ENCODE measurements at regions of chr20 and their contacts with region 1.

Region 1: GRCh38 chr20:45771182-45771759 is 20.4 kb downstream of the WFDC3 start:
- DNase-seq: peak; percentile 69 to 71 (median 70)
- H3K4me3 ChIP-seq: no peak overlapping the region
- H3K4me3 Mint-ChIP-seq: no peak overlapping the region
- H3K27ac ChIP-seq: no peak overlapping the region
- H3K27ac Mint-ChIP-seq: peak overlapping the region in 1 of 7 donors; percentile 23
- H3K4me1 ChIP-seq: no peaks in the 10 kb centered on the region
- H3K4me1 Mint-ChIP-seq: peaks cover 3% of the 10 kb centered on the region
- H3K27me3 ChIP-seq: no peaks in the 10 kb centered on the region
- H3K27me3 Mint-ChIP-seq: peaks cover 3 to 10% (median 8%) of the 10 kb centered on the region in 3 donors
- CTCF ChIP-seq: peak; percentile 89

Region 2: GRCh38 chr20:45450097-45450818 is 321.0 kb before region 1 on chr20:
- intact Hi-C with region 1: loop called in 1 of 2 experiments (anchors 10 kb)
- DNase-seq: peak; percentile 85 to 94 (median 93)
- H3K4me3 ChIP-seq: no peak overlapping the region
- H3K4me3 Mint-ChIP-seq: no peak overlapping the region
- H3K27ac ChIP-seq: no peak overlapping the region
- H3K27ac Mint-ChIP-seq: no peak overlapping the region
- H3K4me1 ChIP-seq: peaks cover 37 to 41% of the 10 kb centered on the region in 2 donors
- H3K4me1 Mint-ChIP-seq: peaks cover 33% of the 10 kb centered on the region
- H3K27me3 ChIP-seq: no peaks in the 10 kb centered on the region
- H3K27me3 Mint-ChIP-seq: peaks cover 3 to 11% (median 6%) of the 10 kb centered on the region in 3 donors
- CTCF ChIP-seq: peak; percentile 88